A673 (cell line): ENCODE measurements at regions of chr1 and their contacts with region 1.

Region 1: DNA sequence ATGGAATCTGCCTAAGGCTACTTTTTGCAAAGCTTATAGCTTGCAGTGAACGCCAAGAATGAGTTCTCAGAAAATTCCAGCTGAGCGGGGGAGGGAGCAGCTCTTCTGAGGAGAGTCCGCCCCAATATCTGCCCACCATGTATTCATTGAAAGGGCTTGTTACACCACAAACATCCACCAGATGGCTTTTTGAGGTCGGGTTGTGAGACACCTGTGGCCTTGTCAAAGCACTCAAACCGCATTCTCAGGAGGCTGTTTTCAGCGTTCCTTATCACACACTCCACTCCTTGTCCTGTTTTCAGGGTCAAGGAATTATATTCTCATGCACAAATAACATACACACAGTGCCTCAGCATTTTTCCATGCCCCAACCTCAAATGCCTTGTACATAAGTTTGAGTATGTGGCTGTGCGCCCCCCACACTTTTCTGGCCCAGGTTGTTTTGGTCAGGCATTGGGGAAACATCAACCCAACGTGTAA is 3.9 kb upstream of the C4BPB start:
- DNase-seq: peak; percentile 72
- H3K4me3 ChIP-seq: no peak overlapping the region
- H3K27ac ChIP-seq: no peak overlapping the region
- H3K4me1 ChIP-seq: no peaks in the 10 kb centered on the region
- H3K27me3 ChIP-seq: peaks cover 33% of the 10 kb centered on the region
- CTCF ChIP-seq: peak; percentile 63

Region 2: DNA sequence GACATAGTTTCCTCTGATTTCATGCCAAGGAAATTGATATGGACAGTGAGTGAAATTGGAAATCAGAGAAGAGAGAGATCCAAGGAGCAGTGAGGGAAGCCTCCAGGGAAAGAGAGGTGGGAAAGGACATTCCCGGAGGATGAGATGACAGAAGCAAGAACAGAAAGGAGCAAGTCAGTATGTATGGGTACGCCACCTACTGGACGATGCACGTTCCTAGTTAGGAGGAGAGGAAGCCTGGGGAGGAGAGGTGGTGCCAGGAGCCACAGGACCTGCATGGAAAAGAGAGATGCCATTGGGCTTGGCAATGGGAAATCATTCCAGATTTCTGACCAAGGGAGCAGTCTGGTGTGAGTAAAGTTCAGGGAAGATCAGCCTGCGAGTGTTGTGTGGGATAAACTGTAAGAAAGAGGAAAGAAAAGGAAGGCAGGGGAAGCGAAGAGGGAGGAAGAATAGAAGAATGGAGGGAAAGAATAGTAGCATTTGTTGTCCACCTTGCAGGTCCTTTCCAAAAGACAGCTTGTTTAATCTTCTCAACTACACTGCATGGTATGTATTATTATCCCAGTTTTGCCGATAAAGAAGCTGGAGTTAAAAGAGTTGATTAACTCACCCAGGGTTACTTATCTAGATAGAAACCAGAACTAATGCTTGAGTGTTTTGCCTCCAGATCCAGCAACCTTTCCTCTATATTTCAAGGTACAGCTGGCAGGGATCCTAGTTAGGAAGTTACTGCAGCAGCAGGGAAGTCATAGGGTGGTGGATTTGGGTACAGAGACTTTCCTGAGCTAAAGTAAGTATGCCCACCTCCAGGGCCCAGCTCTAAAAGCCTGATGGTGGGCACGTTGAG is 79.5 kb before region 1 on chr1:
- CTCF ChIA-PET with region 1: no interaction called
- POLR2A ChIA-PET with region 1: no interaction called
- intact Hi-C with region 1: no loop called
- DNase-seq: peak; percentile 72
- H3K4me3 ChIP-seq: no peak overlapping the region
- H3K27ac ChIP-seq: no peak overlapping the region
- H3K4me1 ChIP-seq: no peaks in the 10 kb centered on the region
- H3K27me3 ChIP-seq: peaks cover under 1% of the 10 kb centered on the region
- CTCF ChIP-seq: peak; percentile 86

Region 3: DNA sequence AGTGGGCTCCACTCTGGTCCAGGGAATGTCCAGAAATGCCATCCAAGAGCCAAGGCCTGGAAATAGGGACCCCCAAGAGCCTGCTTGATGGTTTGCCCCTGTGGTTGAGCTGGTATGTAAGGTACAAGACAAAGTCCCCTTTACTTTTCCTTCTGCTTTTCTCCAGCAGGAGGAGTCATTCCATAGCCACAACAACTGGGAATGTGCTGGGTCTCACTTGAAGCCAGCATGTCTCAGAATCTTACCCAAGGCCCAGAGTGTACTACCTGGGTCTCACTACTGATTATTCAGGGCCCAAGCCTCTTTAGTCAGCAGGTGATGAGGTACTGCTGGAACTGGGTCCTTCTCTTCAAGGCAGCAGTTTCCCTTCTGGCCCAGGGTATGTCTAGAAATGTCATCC is 174.7 kb after region 1 on chr1:
- CTCF ChIA-PET with region 1: no interaction called
- POLR2A ChIA-PET with region 1: no interaction called
- intact Hi-C with region 1: no loop called
- DNase-seq: no peak
- H3K4me3 ChIP-seq: no peak overlapping the region
- H3K27ac ChIP-seq: no peak overlapping the region
- H3K4me1 ChIP-seq: no peaks in the 10 kb centered on the region
- H3K27me3 ChIP-seq: no peaks in the 10 kb centered on the region
- CTCF ChIP-seq: peak; percentile 34

Region 4: GRCh38 chr1:207404849-207405525 is 320.2 kb after region 1 on chr1:
- CTCF ChIA-PET with region 1: interaction called, 16 read pairs
- POLR2A ChIA-PET with region 1: no interaction called
- intact Hi-C with region 1: loop called (anchors 1 kb)
- DNase-seq: peak; percentile 58
- H3K4me3 ChIP-seq: no peak overlapping the region
- H3K27ac ChIP-seq: no peak overlapping the region
- H3K4me1 ChIP-seq: no peaks in the 10 kb centered on the region
- H3K27me3 ChIP-seq: peaks cover 8% of the 10 kb centered on the region
- CTCF ChIP-seq: peak; percentile 80